Caco-2 (cell line): ENCODE measurements at regions of chr1 and their contacts with region 1.

Region 1: DNA sequence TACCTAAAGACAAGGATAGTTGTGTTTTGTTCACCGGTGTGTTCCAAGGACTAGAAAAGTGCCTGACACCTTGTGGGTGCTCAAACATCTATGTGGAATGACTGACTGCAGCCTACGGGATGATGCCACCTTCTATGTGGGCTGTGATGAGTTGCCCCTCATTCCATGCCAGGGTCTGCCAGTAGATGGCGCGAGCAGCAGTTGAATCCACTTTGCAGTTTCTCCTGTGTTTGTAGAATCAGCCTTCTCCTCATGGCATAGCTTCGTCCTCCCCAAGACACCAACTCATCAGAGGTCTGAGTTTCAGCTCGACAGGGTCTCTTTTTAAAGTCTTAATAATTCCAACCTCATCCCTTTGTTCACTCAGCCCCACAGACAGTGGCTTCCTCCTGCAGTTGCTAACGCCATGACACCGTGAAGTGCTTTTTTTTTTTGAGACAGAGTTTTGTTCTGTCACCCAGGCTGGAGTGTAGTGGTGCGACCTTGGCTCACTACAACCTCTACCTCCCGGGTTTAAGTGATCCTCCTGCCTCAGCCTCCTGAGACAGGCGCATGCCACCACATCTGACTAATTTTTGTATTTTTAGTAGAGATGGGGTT is 133.7 kb downstream of the CAPN8 start:
- DNase-seq: peak; percentile 62 to 66
- H3K4me3 ChIP-seq: no peak overlapping the region
- H3K4me3 Mint-ChIP-seq: no peak overlapping the region
- H3K27ac Mint-ChIP-seq: no peak overlapping the region
- H3K4me1 ChIP-seq: no peaks in the 10 kb centered on the region
- H3K4me1 Mint-ChIP-seq: no peaks in the 10 kb centered on the region
- H3K27me3 ChIP-seq: no peaks in the 10 kb centered on the region
- H3K27me3 Mint-ChIP-seq: no peaks in the 10 kb centered on the region
- CTCF ChIP-seq: peak; percentile 63 to 76

Region 2: GRCh38 chr1:223454959-223455358 is 76.9 kb before region 1 on chr1:
- CTCF ChIA-PET with region 1: no interaction called
- POLR2A ChIA-PET with region 1: no interaction called
- intact Hi-C with region 1: no loop called
- DNase-seq: no peak
- H3K4me3 ChIP-seq: no peak overlapping the region
- H3K4me3 Mint-ChIP-seq: no peak overlapping the region
- H3K27ac Mint-ChIP-seq: no peak overlapping the region
- H3K4me1 ChIP-seq: no peaks in the 10 kb centered on the region
- H3K4me1 Mint-ChIP-seq: no peaks in the 10 kb centered on the region
- H3K27me3 ChIP-seq: no peaks in the 10 kb centered on the region; the same call in 1 of the 2 replicates
- H3K27me3 Mint-ChIP-seq: no peaks in the 10 kb centered on the region
- CTCF ChIP-seq: no peak

Region 3: DNA sequence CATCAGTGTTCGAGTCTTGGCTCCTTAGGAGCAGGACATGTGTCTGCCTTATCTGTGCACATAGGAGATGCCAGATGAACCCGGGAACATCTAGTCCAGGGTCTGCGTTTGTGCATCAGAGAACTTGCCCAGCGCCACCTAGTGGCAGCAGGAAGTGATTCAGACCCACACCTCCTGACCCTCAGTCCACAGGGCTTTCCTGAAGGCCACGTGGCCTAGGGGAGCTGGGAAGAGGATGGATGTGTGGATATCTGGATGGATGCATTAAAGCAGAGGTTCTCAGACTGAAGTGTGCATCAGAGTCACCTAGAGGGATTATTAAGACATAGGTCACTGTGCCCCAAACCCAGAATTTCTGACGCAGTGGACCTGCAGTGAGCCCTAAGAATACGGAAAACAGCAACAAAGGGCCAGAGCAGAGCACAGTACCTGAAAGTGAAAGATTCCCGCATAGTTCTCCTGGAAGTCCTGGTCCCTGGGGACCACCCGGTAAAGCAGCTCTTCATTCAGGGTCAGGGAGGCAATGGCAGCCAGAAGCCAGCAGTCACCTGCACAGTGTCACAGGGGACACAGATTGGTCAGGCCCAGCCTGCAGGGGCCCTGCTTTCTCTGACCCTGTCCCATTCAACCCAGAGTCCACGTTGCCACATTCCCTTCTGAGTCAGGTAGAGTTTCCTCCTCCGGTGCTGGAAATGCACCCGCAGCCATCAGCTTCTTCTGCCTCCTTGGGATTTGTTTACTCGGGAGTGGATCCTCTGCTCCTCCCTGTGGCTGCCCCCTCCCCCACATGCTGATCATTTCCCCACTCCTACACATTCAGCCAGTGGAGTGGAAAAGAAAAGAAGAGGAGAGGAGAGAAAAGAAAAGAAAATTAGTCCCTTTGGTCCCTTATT is 96.6 kb after region 1 on chr1:
- CTCF ChIA-PET with region 1: no interaction called
- POLR2A ChIA-PET with region 1: no interaction called
- intact Hi-C with region 1: loop called (anchors 1 kb)
- DNase-seq: peak; percentile 62 to 68
- H3K4me3 ChIP-seq: no peak overlapping the region
- H3K4me3 Mint-ChIP-seq: no peak overlapping the region
- H3K27ac Mint-ChIP-seq: no peak overlapping the region
- H3K4me1 ChIP-seq: no peaks in the 10 kb centered on the region
- H3K4me1 Mint-ChIP-seq: no peaks in the 10 kb centered on the region
- H3K27me3 ChIP-seq: no peaks in the 10 kb centered on the region
- H3K27me3 Mint-ChIP-seq: no peaks in the 10 kb centered on the region
- CTCF ChIP-seq: peak; percentile 56 to 73